Mammary epithelial cell (primary cell): ENCODE measurements at regions of chr16 and their contacts with region 1.

Region 1: GRCh38 chr16:2673066-2673999 is 9.0 kb upstream of the KCTD5 start:
- DNase-seq: peak; percentile 93
- H3K4me3 ChIP-seq: peak overlapping the region; percentile 75
- H3K27ac ChIP-seq: no peak overlapping the region
- H3K4me1 ChIP-seq: peaks cover 9% of the 10 kb centered on the region
- H3K27me3 ChIP-seq: no peaks in the 10 kb centered on the region
- CTCF ChIP-seq: no peak

Region 2: GRCh38 chr16:2656985-2657384 is 16.3 kb before region 1 on chr16:
- CTCF ChIA-PET with region 1: no interaction called
- dilution Hi-C with region 1: no loop called
- in situ Hi-C with region 1: no loop called
- intact Hi-C with region 1: no loop called
- DNase-seq: no peak
- H3K4me3 ChIP-seq: no peak overlapping the region
- H3K27ac ChIP-seq: no peak overlapping the region
- H3K4me1 ChIP-seq: no peaks in the 10 kb centered on the region
- H3K27me3 ChIP-seq: no peaks in the 10 kb centered on the region
- CTCF ChIP-seq: no peak

Region 3: DNA sequence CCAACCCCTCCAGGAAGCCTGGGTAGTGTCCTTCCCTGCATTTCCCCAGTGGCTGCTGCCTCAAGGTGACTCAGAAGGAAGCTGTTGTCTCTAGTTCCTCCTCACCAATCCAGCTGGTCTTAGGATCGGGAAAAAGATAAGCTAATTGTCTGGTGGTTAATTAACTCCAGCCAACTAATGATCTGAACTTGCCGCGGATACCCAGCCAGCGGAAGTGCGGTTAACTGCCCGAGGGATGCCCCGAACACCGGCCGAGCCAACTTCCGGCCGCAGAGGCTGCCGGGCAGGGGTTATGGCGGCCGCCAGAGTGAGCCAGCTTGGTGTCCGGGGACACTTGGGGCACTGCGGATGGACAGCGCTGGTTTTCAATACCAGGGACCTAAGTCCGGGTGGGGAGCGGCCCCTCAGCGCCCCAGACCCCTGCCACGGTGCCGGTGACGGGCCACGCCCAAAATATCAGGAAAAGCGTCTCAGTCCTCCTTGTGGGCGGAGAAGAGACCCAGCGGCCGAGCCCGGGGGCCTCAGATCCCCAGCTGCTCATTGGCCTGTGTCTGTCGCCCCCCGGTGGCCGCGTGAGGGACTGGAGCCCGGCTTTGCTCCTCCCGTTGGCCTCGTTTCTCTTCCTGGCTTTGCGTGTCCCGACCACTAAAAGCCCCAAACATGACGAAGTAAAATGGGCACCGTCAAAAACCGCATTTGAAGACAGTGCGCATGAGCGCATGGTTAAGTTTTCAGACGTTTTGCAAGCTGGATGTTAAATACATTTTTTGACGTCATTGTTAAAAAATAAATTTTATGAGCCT is 194.9 kb after region 1 on chr16:
- CTCF ChIA-PET with region 1: no interaction called
- dilution Hi-C with region 1: no loop called
- in situ Hi-C with region 1: no loop called
- intact Hi-C with region 1: loop called (anchors 5 kb)
- DNase-seq: peak; percentile 90
- H3K4me3 ChIP-seq: peak overlapping the region; percentile 55 to 65 (median 62)
- H3K27ac ChIP-seq: peak overlapping the region; percentile 70
- H3K4me1 ChIP-seq: peaks cover 7% of the 10 kb centered on the region
- H3K27me3 ChIP-seq: no peaks in the 10 kb centered on the region
- CTCF ChIP-seq: peak; percentile 90 to 97